Cardiac septum (tissue), 1 donor: ENCODE measurements at regions of chr10 and their contacts with region 1.

Region 1: GRCh38 chr10:84328418-84329195 is at the start of gene CCSER2:
- DNase-seq: peak; percentile 99
- total RNA-seq, gene CCSER2: 193 TPM

Region 2: GRCh38 chr10:84429926-84430520 is 101.4 kb after region 1 on chr10:
- intact Hi-C with region 1: loop called (anchors 5 kb)
- DNase-seq: no peak